Sigmoid colon (tissue), 7 donors: ENCODE measurements at regions of chr22 and their contacts with region 1.

Region 1: DNA sequence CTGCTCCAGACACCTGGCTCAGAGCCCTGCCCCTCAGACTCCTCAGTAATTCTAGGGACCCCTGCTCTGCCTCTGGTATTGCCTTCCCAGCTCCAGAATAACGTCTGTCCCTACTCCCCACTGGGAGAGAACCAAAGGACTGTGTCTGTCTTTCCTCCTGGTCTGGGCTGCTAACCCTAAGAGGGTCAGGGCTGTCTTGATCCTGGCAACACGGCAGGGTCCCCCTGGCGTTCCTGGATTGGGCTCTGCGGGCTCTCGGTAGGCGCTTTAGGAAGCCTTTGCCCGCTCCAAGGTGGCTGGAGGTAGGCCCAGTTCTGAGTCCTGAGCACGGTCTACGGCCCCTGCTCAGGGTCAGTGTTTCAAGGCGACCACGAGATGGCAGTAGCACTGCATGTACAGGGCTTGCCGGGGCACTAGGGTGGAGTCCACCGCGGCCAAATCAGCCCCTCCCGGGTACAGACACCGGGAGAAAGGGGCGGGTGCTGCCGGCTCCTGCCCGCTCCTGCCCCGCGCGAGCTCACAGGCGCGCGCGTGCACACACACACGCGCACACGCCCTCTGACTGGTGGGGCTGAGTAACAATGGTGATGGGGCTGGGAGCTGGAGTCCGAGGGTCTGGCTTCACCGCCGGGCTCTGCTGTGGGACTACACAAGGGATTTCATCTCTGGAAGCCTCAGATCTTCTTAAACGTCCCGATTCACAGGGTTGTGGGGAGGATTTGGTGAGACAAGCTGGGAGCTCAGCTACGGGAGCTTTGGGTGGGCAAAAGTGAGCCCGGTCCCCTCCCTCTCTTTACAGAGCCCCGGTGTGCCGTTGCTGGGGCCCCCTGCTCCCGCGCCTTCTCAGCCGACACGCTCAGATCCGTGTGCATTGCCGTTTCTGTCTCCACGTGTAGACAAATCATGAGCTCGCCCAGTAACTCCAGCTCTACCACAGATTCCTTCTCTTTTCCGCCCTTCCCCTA is 30.1 kb upstream of the HMOX1 start:
- DNase-seq: peak; percentile 98
- H3K4me3 ChIP-seq: peak overlapping the region; percentile 27 to 57 (median 52)
- H3K27ac ChIP-seq: peak overlapping the region; percentile 82 to 88 (median 85)
- H3K4me1 ChIP-seq: peaks cover 6 to 41% (median 25%) of the 10 kb centered on the region in 4 donors
- H3K27me3 ChIP-seq: no peaks in the 10 kb centered on the region
- CTCF ChIP-seq: peak; percentile 79 to 97 (median 89)
- EP300 ChIP-seq: peak in 1 of 4 donors; percentile 34
- POLR2A ChIP-seq: peak in 1 of 2 donors; percentile 44

Region 2: DNA sequence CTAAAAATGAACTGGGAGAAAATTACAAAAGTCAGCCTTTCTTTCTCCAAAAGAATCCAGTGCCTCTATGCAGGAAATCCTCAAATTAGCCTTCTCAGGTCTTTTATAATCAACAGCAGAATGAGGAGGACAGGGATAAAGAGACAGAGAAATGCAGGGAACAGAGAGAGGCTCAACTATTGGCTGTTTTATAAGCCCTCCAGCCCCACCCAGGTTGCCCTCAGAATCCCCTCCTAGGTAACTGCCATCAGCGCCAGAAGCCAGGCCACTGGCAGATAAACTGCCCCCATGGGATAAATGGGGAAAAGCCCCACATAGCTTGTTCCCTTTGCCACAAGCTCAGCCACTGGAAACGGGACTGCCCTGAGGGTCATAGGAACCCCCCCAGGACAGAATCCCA is 19.2 kb after region 1 on chr22:
- intact Hi-C with region 1: loop called (anchors 2 kb)
- DNase-seq: no peak
- H3K4me3 ChIP-seq: no peak overlapping the region
- H3K27ac ChIP-seq: no peak overlapping the region
- H3K4me1 ChIP-seq: peaks cover 0 to 14% (median 7%) of the 10 kb centered on the region in 4 donors
- H3K27me3 ChIP-seq: peaks cover 0 to 11% (median 5%) of the 10 kb centered on the region in 3 donors
- CTCF ChIP-seq: no peak
- EP300 ChIP-seq: no peak
- POLR2A ChIP-seq: no peak

Region 3: GRCh38 chr22:35399678-35400334 is 49.0 kb after region 1 on chr22 and contains the start of gene MCM5:
- intact Hi-C with region 1: loop called (anchors 2 kb)
- DNase-seq: peak; percentile 99
- H3K4me3 ChIP-seq: peak within 1 kb of the TSS; percentile 62 to 94 (median 73)
- H3K27ac ChIP-seq: peak within 1 kb of the TSS; percentile 54 to 75 (median 66)
- H3K4me1 ChIP-seq: peaks cover 0 to 15% (median 10%) of the 10 kb centered on the region in 4 donors
- H3K27me3 ChIP-seq: no peaks in the 10 kb centered on the region
- CTCF ChIP-seq: no peak
- EP300 ChIP-seq: no peak
- POLR2A ChIP-seq: no peak
- total RNA-seq, gene MCM5: 10.0 to 15.0 (median 12.6) TPM